ENCODE measurements at regions of chr22 and their contacts with region 1.

Region 1: DNA sequence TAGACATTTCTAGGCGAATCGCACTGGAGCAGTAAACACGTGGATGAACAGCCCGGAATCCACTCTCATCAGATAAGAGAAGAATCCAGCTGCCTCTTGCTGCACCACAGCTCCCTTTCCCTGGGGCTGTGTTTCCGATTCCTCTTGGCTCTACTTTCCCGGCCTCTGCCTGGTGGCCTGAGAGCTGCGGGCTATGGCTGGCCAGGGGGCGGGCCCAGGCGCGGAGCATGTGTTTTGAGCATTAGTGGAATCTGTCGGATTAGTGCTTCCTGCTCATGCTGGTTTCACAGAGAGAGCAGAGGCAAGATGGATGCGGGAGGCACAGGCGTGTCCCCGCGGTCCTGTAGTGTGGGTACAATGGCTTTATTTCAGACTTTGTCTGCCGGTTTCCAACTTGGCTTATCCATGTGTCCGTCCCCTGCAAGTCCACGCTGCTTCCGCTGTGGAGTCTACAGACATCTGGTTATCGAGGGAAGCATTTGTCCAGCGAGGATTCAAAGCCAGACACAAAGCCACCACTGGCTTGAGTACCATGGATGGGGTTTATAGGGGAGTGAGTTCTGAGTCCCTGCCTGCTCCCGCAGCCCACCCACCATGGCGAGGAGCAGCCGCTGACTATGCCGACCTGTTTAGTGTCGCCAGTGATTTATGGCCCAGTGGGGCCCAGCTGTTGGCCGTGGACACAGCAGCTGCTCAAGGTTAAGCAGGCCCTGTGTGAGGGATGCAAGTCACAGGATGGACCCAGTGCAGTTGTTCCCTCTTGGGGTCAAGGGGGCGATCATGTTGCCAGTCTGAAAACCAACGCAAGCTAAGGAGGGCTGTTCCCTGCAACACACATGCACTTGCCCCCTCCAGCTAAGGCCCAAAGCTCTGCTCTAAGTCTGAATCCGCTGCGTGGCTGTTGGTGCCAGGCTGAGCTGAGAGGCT is 43.3 kb upstream of the EP300 start:
- DNase-seq: peak; percentile 80
- ATAC-seq: peak; percentile 79
- H3K4me3 ChIP-seq: no peak overlapping the region
- H3K27ac ChIP-seq: peak overlapping the region; percentile 52; the same call in 1 of the 2 replicates
- H3K4me1 ChIP-seq: peaks cover 15% of the 10 kb centered on the region; the same call in 1 of the 2 replicates
- H3K27me3 ChIP-seq: no peaks in the 10 kb centered on the region
- CTCF ChIP-seq: no peak
- POLR2A ChIP-seq: no peak
- RAD21 ChIP-seq: no peak

Region 2: GRCh38 chr22:41028841-41029240 is 20.2 kb before region 1 on chr22:
- CTCF ChIA-PET with region 1: no interaction called
- POLR2A ChIA-PET with region 1: no interaction called
- dilution Hi-C with region 1: no loop called
- in situ Hi-C with region 1: no loop called
- intact Hi-C with region 1: loop called (anchors 2 kb)
- DNase-seq: peak; percentile 94
- ATAC-seq: peak; percentile 97
- H3K4me3 ChIP-seq: no peak overlapping the region
- H3K27ac ChIP-seq: no peak overlapping the region
- H3K4me1 ChIP-seq: peaks cover 9% of the 10 kb centered on the region
- H3K27me3 ChIP-seq: no peaks in the 10 kb centered on the region
- CTCF ChIP-seq: no peak
- POLR2A ChIP-seq: no peak
- RAD21 ChIP-seq: no peak

Region 3: GRCh38 chr22:41091132-41092022 is 42.3 kb after region 1 on chr22:
- CTCF ChIA-PET with region 1: no interaction called
- POLR2A ChIA-PET with region 1: interaction called, 3 read pairs
- dilution Hi-C with region 1: no loop called
- in situ Hi-C with region 1: no loop called
- intact Hi-C with region 1: loop called (anchors 2 kb)
- DNase-seq: peak; percentile 98
- ATAC-seq: peak; percentile 93
- H3K4me3 ChIP-seq: peak overlapping the region; percentile 84
- H3K27ac ChIP-seq: peak overlapping the region; percentile 97
- H3K4me1 ChIP-seq: peaks cover 3% of the 10 kb centered on the region
- H3K27me3 ChIP-seq: no peaks in the 10 kb centered on the region
- CTCF ChIP-seq: no peak
- POLR2A ChIP-seq: peak; percentile 77
- RAD21 ChIP-seq: 0 out of 2 replicates have a peak, but pooled peaks have one; percentile 25